ENCODE measurements at regions of chr6 and their contacts with region 1.

Region 1: GRCh38 chr6:51398064-51398705 is 579.5 kb downstream of the TFAP2B start:
- DNase-seq: peak; percentile 24
- ATAC-seq: peak; percentile 92
- H3K4me3 ChIP-seq: no peak overlapping the region
- H3K27ac ChIP-seq: no peak overlapping the region
- H3K4me1 ChIP-seq: no peaks in the 10 kb centered on the region
- H3K27me3 ChIP-seq: no peaks in the 10 kb centered on the region
- CTCF ChIP-seq: no peak
- EP300 ChIP-seq: no peak
- POLR2A ChIP-seq: no peak
- RAD21 ChIP-seq: no peak

Region 2: GRCh38 chr6:51182827-51183226 is 215.4 kb before region 1 on chr6:
- CTCF ChIA-PET with region 1: no interaction called
- POLR2A ChIA-PET with region 1: no interaction called
- RAD21 ChIA-PET with region 1: no interaction called
- SMC1A ChIA-PET with region 1: no interaction called
- in situ Hi-C with region 1: no loop called
- intact Hi-C with region 1: no loop called
- DNase-seq: no peak
- ATAC-seq: no peak
- H3K4me3 ChIP-seq: no peak overlapping the region
- H3K27ac ChIP-seq: no peak overlapping the region
- H3K4me1 ChIP-seq: no peaks in the 10 kb centered on the region
- H3K27me3 ChIP-seq: no peaks in the 10 kb centered on the region
- CTCF ChIP-seq: no peak
- EP300 ChIP-seq: no peak
- POLR2A ChIP-seq: no peak
- RAD21 ChIP-seq: no peak

Region 3: GRCh38 chr6:51513891-51514747 is 115.9 kb after region 1 on chr6:
- CTCF ChIA-PET with region 1: no interaction called
- POLR2A ChIA-PET with region 1: no interaction called
- RAD21 ChIA-PET with region 1: interaction called, 4 read pairs
- SMC1A ChIA-PET with region 1: interaction called, 3 read pairs
- in situ Hi-C with region 1: no loop called
- intact Hi-C with region 1: loop called (anchors 5 kb)
- DNase-seq: no peak
- ATAC-seq: no peak; the same call in 2 of the 3 replicates
- H3K4me3 ChIP-seq: no peak overlapping the region
- H3K27ac ChIP-seq: no peak overlapping the region
- H3K4me1 ChIP-seq: no peaks in the 10 kb centered on the region
- H3K27me3 ChIP-seq: no peaks in the 10 kb centered on the region
- CTCF ChIP-seq: no peak
- EP300 ChIP-seq: no peak
- POLR2A ChIP-seq: no peak
- RAD21 ChIP-seq: no peak